ENCODE measurements at regions of chr5 and their contacts with region 1.

Region 1: DNA sequence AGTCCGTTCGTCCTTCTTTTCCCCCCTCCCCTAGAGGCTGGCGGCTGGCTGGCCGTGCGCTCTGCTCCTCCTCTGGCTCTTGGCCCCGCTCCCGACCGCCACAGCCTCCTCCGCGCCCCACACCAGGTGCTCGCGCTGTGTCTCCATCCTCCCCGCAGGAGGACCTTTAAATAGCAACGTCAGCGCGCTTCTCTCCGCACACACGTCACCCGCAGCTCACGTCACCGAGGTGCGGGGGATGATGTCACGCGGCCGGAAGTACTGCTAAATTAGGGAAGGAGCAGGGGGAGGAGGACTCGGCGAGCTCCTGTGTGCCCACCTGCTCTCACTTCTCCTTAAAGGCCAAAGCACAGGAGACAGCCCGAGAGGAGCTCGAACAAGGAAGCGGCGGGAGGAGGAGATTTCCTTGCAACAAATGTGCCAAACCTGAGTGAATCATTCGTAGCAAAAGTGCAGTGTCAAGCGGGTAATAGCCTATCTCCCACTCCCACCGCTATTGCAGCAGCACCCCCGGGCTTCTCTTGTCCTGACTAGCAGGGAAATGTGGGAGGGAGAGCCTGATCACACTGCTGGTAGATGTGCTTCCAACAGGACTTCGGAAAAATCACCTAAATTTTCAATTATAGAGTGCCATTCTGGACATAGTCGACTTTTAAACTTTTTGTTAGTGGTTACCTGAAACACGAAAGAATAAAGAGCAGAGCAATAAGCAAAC is 614 bp upstream of the HOMER1 start:
- DNase-seq: peak; percentile 88 to 95
- ATAC-seq: peak; percentile 85 to 93 (median 88)
- H3K4me3 ChIP-seq: peak overlapping the region; percentile 82
- H3K27ac ChIP-seq: peak overlapping the region; percentile 95
- H3K4me1 ChIP-seq: peaks cover 1% of the 10 kb centered on the region
- H3K27me3 ChIP-seq: no peaks in the 10 kb centered on the region
- CTCF ChIP-seq: no peak

Region 2: GRCh38 chr5:79229357-79230174 is 285.0 kb before region 1 on chr5:
- intact Hi-C with region 1: no loop called
- DNase-seq: no peak
- ATAC-seq: no peak
- H3K4me3 ChIP-seq: no peak overlapping the region
- H3K27ac ChIP-seq: no peak overlapping the region
- H3K4me1 ChIP-seq: no peaks in the 10 kb centered on the region
- H3K27me3 ChIP-seq: no peaks in the 10 kb centered on the region
- CTCF ChIP-seq: no peak

Region 3: DNA sequence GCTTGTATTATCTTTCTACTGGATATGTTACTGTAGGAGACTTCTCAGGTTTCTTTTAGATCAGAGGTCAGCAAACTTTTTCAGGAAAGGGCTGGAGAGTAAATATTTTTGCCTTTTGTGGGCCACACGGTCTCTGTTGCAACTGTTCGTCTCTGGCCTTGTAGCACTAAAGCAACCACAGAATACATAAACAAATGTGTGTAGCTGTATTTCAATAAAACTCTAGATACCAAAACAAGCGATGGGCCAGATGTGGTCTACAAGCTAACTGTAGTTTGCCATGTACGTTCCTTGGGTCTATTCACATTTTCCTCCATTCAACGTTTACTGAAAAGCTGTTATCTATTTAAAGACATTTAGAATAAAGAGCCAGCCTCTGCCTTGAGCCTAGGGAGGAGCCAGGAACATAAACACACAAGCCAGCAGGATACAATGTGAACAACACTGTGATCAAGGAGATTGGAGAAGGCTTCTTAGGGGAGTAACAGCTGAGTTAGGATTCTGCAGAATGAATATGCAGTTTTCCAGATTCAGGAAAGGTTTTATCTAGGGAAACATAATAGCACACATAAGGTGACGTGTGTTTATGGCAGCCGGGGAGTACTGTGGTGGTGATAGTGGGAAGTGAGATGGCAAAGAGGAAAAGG is 32.4 kb after region 1 on chr5:
- intact Hi-C with region 1: loop called in 1 of 2 experiments (anchors 5 kb)
- DNase-seq: no peak
- ATAC-seq: peak; percentile 18 to 62 (median 46)
- H3K4me3 ChIP-seq: peak overlapping the region; percentile 61
- H3K27ac ChIP-seq: peak overlapping the region; percentile 88
- H3K4me1 ChIP-seq: peaks cover 22% of the 10 kb centered on the region
- H3K27me3 ChIP-seq: no peaks in the 10 kb centered on the region
- CTCF ChIP-seq: no peak

Region 4: GRCh38 chr5:79689541-79690466 is 175.3 kb after region 1 on chr5 and contains the start of gene CMYA5:
- intact Hi-C with region 1: loop called in 1 of 2 experiments (anchors 5 kb)
- DNase-seq: peak; percentile 84 to 93
- ATAC-seq: peak; percentile 82 to 87 (median 84)
- H3K4me3 ChIP-seq: peak within 1 kb of the TSS; percentile 82
- H3K27ac ChIP-seq: peak within 1 kb of the TSS; percentile 99
- H3K4me1 ChIP-seq: peaks cover 15% of the 10 kb centered on the region
- H3K27me3 ChIP-seq: no peaks in the 10 kb centered on the region
- CTCF ChIP-seq: no peak
- total RNA-seq, gene CMYA5: 1,174 to 1,472 (median 1,378) TPM

Measured in psoas muscle (tissue), 8 donors.